BJ (cell line): ENCODE measurements at regions of chr11 and their contacts with region 1.

Region 1: GRCh38 chr11:93895106-93895862 is 44.9 kb upstream of the VSTM5 start:
- DNase-seq: peak; percentile 53
- H3K4me3 ChIP-seq: no peak overlapping the region
- H3K27me3 ChIP-seq: peaks cover 4% of the 10 kb centered on the region
- CTCF ChIP-seq: peak; percentile 74

Region 2: DNA sequence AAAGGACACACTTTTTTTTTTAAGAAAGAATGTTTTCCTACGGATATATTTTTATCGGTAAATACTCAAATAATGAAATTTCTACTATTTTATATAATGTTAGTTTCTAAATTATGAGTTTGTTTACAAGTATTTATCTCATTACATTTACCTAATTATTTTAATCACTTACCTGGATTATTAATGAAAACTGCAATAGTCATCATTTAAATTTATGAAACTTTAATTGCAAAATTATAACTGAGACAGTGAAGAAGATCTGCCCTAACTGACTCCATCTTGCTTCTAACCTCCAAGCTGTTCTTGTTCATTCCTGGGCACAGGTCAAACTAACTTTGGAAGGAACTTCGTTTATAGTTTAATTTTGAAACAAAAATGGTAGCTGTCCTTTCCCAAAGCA is 19.6 kb before region 1 on chr11:
- CTCF ChIA-PET with region 1: interaction called, 23 read pairs
- POLR2A ChIA-PET with region 1: no interaction called
- DNase-seq: no peak
- H3K4me3 ChIP-seq: no peak overlapping the region
- H3K27me3 ChIP-seq: no peaks in the 10 kb centered on the region; the same call in 1 of the 2 replicates
- CTCF ChIP-seq: no peak

Region 3: GRCh38 chr11:93921695-93922468 is 26.6 kb after region 1 on chr11:
- CTCF ChIA-PET with region 1: interaction called, 16 read pairs
- POLR2A ChIA-PET with region 1: no interaction called
- DNase-seq: no peak
- H3K4me3 ChIP-seq: no peak overlapping the region
- H3K27me3 ChIP-seq: peaks cover 5% of the 10 kb centered on the region
- CTCF ChIP-seq: peak; percentile 83

Region 4: GRCh38 chr11:94171693-94172440 is 276.6 kb after region 1 on chr11:
- CTCF ChIA-PET with region 1: interaction called, 13 read pairs
- POLR2A ChIA-PET with region 1: no interaction called
- DNase-seq: no peak
- H3K4me3 ChIP-seq: no peak overlapping the region
- H3K27me3 ChIP-seq: no peaks in the 10 kb centered on the region
- CTCF ChIP-seq: peak; percentile 91

Region 5: DNA sequence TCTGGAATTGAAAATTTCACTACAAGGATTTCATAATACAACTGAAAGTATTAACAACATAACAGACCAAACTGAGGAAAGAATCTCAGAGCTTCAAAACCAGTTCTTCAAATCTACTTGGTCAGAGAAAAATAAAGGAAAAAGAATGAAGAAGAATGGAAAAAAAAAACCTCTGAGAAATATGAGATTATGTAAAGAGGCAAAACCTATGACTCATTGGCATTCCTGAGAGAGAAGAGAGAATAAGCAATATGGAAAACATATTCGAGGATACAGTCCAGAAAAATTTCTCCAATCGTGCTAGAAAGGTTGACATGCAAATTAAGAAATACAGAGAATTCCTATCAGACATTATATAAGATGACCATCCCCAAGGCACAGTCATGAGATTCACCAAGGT is 529.4 kb after region 1 on chr11:
- CTCF ChIA-PET with region 1: interaction called, 49 read pairs
- POLR2A ChIA-PET with region 1: no interaction called
- DNase-seq: no peak
- H3K4me3 ChIP-seq: no peak overlapping the region
- H3K27me3 ChIP-seq: no peaks in the 10 kb centered on the region
- CTCF ChIP-seq: no peak